Caco-2 (cell line): ENCODE measurements at regions of chr17 and their contacts with region 1.

Region 1: DNA sequence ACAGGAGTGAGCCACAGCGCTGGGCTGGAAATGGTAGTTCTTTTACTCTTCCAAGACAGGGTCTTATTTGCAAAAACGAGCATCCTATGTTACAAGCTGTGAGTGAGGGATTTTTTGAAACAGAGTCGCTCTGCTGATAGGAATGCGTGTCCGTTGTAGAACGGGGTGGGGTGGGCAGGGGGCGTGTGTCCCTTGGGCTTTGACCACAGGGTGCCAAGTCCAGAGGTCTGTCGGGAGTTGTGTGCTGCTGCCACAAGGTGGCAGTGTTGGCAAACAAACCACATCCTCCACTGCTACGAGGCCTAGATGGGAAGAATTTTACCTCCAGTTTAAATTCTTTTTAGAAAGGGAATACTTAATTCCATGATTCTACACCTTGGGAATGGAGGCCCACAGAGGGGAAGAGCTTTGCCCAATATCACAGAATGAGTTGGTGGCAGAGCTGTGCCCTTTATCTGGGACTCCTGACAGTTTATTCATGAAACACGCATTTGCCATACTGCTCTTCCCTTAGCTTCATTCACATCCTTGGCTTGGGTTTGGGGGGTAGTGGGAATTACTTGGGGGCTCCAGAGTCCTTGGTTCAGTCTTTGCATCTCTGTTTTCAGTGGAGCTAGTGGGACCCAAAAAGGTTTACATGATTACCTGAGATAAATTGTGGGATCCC is 30.6 kb upstream of the ETV4 start:
- DNase-seq: peak; percentile 86 to 88
- H3K4me3 ChIP-seq: no peak overlapping the region
- H3K4me3 Mint-ChIP-seq: no peak overlapping the region
- H3K27ac Mint-ChIP-seq: peak overlapping the region; percentile 92
- H3K4me1 ChIP-seq: peaks cover 78% of the 10 kb centered on the region
- H3K4me1 Mint-ChIP-seq: peaks cover 66% of the 10 kb centered on the region
- H3K27me3 ChIP-seq: no peaks in the 10 kb centered on the region
- H3K27me3 Mint-ChIP-seq: no peaks in the 10 kb centered on the region
- CTCF ChIP-seq: peak; percentile 95 to 98

Region 2: DNA sequence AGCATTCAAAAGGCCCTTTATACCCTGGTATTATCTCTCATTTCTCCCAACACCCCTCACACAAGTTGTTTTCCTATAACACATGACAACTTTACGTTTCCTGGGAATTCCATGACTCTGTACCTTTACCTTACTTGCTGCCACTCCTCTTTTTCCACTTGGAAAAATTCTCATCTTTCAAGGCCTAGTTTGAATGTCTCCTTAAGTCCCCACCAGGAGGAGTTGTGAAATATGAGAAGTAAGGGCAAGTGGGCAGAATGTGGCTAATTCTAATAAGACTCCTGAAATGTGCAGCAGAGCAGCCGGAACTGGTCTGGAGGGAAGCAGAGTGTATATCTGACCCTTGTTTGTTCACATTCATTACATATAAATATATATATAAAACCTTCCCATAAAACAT is 491.2 kb before region 1 on chr17:
- CTCF ChIA-PET with region 1: no interaction called
- POLR2A ChIA-PET with region 1: no interaction called
- intact Hi-C with region 1: no loop called
- DNase-seq: peak in 1 of 2 experiments; percentile 19
- H3K4me3 ChIP-seq: no peak overlapping the region
- H3K4me3 Mint-ChIP-seq: no peak overlapping the region
- H3K27ac Mint-ChIP-seq: no peak overlapping the region
- H3K4me1 ChIP-seq: peaks cover 12% of the 10 kb centered on the region; the same call in 1 of the 2 replicates
- H3K4me1 Mint-ChIP-seq: no peaks in the 10 kb centered on the region
- H3K27me3 ChIP-seq: no peaks in the 10 kb centered on the region
- H3K27me3 Mint-ChIP-seq: no peaks in the 10 kb centered on the region
- CTCF ChIP-seq: peak in 1 of 2 experiments; percentile 46

Region 3: GRCh38 chr17:43477832-43478634 is 98.7 kb before region 1 on chr17:
- CTCF ChIA-PET with region 1: no interaction called
- POLR2A ChIA-PET with region 1: no interaction called
- intact Hi-C with region 1: no loop called
- DNase-seq: no peak
- H3K4me3 ChIP-seq: no peak overlapping the region
- H3K4me3 Mint-ChIP-seq: no peak overlapping the region
- H3K27ac Mint-ChIP-seq: no peak overlapping the region
- H3K4me1 ChIP-seq: peaks cover 12% of the 10 kb centered on the region
- H3K4me1 Mint-ChIP-seq: peaks cover 6% of the 10 kb centered on the region
- H3K27me3 ChIP-seq: no peaks in the 10 kb centered on the region
- H3K27me3 Mint-ChIP-seq: no peaks in the 10 kb centered on the region
- CTCF ChIP-seq: no peak

Region 4: DNA sequence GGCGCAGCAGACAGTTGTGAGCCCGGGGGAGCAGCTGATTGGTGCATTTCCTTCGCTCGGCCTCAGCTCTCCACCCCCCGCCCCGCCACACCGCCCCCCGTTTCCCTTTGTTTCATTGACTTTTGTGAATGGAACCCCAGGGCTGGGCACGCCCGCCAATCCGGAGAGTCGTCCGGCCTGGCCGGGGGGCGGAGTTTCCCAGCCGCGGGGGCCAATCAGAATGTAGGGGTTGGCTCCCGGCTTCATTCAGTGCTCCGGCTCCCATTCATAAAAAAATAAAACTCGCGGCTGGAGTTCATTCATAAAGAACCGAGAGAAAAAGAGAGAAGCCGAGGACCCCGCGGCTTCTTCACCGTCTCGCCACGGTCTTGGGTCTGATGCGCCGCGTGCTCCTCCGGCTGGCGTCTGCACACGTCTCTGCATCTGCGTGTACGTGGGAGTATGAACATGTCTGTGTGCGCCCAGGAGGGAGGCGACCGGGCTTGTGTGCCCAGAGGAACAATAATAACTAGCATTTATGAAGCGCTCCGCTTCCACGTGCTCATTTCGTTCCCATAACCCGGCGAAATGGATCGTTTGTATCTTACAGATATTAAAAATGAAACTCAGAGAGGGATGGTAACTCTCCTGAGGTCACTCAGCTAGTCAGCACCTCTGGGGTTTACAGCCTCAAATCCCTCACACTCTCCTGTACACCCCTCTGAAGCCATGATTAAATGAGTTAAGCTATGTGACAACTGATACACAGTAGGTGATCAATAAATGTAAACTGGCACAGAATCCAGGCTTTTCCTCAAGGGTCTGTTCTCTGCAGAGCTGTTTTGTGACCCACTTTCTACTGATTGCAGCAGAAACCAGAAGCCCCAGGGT is 30.1 kb before region 1 on chr17 and contains the start of gene ETV4:
- CTCF ChIA-PET with region 1: interaction called, 4 read pairs
- POLR2A ChIA-PET with region 1: interaction called, 3 read pairs
- intact Hi-C with region 1: loop called (anchors 2 kb)
- DNase-seq: peak; percentile 96 to 97
- H3K4me3 ChIP-seq: peak within 1 kb of the TSS; percentile 75
- H3K4me3 Mint-ChIP-seq: peak within 1 kb of the TSS; percentile 85
- H3K27ac Mint-ChIP-seq: peak within 1 kb of the TSS; percentile 93
- H3K4me1 ChIP-seq: peaks cover 19% of the 10 kb centered on the region
- H3K4me1 Mint-ChIP-seq: peaks cover 17% of the 10 kb centered on the region
- H3K27me3 ChIP-seq: no peaks in the 10 kb centered on the region
- H3K27me3 Mint-ChIP-seq: no peaks in the 10 kb centered on the region
- CTCF ChIP-seq: no peak
- total RNA-seq, gene ETV4: 37.8 and 48.5 TPM in 2 replicates

Region 5: GRCh38 chr17:43628089-43628650 is 51.5 kb after region 1 on chr17:
- CTCF ChIA-PET with region 1: interaction called, 3 read pairs
- POLR2A ChIA-PET with region 1: no interaction called
- intact Hi-C with region 1: loop called (anchors 5 kb)
- DNase-seq: no peak
- H3K4me3 ChIP-seq: no peak overlapping the region
- H3K4me3 Mint-ChIP-seq: peak overlapping the region; percentile 36
- H3K27ac Mint-ChIP-seq: peak overlapping the region; percentile 69
- H3K4me1 ChIP-seq: peaks cover 54% of the 10 kb centered on the region
- H3K4me1 Mint-ChIP-seq: peaks cover 27% of the 10 kb centered on the region
- H3K27me3 ChIP-seq: no peaks in the 10 kb centered on the region
- H3K27me3 Mint-ChIP-seq: no peaks in the 10 kb centered on the region
- CTCF ChIP-seq: no peak

Region 6: GRCh38 chr17:43673516-43674323 is 97.0 kb after region 1 on chr17:
- CTCF ChIA-PET with region 1: interaction called, 208 read pairs
- POLR2A ChIA-PET with region 1: interaction called, 46 read pairs
- intact Hi-C with region 1: loop called (anchors 1 kb)
- DNase-seq: peak; percentile 78 to 86
- H3K4me3 ChIP-seq: no peak overlapping the region
- H3K4me3 Mint-ChIP-seq: no peak overlapping the region
- H3K27ac Mint-ChIP-seq: peak overlapping the region; percentile 90
- H3K4me1 ChIP-seq: peaks cover 75% of the 10 kb centered on the region
- H3K4me1 Mint-ChIP-seq: peaks cover 71% of the 10 kb centered on the region
- H3K27me3 ChIP-seq: no peaks in the 10 kb centered on the region
- H3K27me3 Mint-ChIP-seq: no peaks in the 10 kb centered on the region
- CTCF ChIP-seq: peak; percentile 94 to 97